A673 (cell line): ENCODE measurements at regions of chr22 and their contacts with region 1.

Region 1: DNA sequence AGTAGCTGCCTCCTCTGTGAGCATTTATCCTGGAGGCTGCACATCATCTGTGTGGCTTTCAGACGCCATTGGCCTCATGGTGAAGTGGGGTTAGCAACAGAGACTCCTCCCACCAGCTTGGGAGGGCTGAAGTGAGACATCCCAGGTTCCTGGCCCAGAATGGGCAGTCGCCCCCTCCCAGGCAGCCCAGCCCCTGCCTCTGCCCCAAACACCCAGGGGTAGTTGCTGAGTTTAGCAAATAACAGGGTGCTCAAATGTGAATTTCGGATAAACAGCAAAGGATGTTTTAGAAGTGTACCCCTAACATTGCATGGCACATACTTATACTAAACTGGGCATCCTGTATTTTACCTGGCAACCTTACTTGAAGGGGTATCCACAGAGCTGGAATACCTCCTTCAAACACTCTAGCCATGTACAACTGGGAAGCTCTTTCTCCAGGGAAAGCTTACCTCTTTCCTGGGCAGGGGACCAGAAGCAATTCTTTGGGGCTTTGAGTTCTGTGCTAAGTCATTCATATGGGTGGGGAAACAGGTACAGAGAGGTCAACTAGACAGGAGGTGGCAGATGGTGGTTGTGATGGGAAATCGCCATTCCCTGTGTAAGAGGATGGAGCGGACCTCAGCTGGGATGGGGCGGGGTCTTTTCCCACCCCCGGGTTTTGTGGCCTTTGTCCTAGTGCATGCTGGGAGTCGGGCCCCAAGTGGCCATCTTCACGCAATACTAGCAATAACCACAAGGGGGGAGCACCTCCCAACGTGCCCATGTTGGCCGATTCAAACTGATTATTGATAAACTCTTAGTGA is 19.3 kb downstream of the MTFP1 start:
- DNase-seq: peak; percentile 80
- H3K4me3 ChIP-seq: no peak overlapping the region
- H3K27ac ChIP-seq: peak overlapping the region; percentile 26
- H3K4me1 ChIP-seq: peaks cover 20% of the 10 kb centered on the region
- H3K27me3 ChIP-seq: no peaks in the 10 kb centered on the region
- CTCF ChIP-seq: peak; percentile 84

Region 2: GRCh38 chr22:30485362-30485988 is 40.6 kb after region 1 on chr22:
- CTCF ChIA-PET with region 1: no interaction called
- POLR2A ChIA-PET with region 1: no interaction called
- intact Hi-C with region 1: loop called (anchors 2 kb)
- DNase-seq: peak; percentile 61
- H3K4me3 ChIP-seq: no peak overlapping the region
- H3K27ac ChIP-seq: no peak overlapping the region
- H3K4me1 ChIP-seq: no peaks in the 10 kb centered on the region
- H3K27me3 ChIP-seq: no peaks in the 10 kb centered on the region
- CTCF ChIP-seq: peak; percentile 97

Region 3: GRCh38 chr22:30606455-30607299 is 161.8 kb after region 1 on chr22 and contains the start of gene TCN2:
- CTCF ChIA-PET with region 1: interaction called, 4 read pairs
- POLR2A ChIA-PET with region 1: no interaction called
- intact Hi-C with region 1: loop called (anchors 10 kb)
- DNase-seq: peak; percentile 67
- H3K4me3 ChIP-seq: peak within 1 kb of the TSS; percentile 57
- H3K27ac ChIP-seq: peak within 1 kb of the TSS; percentile 56
- H3K4me1 ChIP-seq: peaks cover 18% of the 10 kb centered on the region
- H3K27me3 ChIP-seq: no peaks in the 10 kb centered on the region
- CTCF ChIP-seq: no peak
- total RNA-seq, gene TCN2: 7.3 and 9.8 TPM in 2 replicates

Region 4: DNA sequence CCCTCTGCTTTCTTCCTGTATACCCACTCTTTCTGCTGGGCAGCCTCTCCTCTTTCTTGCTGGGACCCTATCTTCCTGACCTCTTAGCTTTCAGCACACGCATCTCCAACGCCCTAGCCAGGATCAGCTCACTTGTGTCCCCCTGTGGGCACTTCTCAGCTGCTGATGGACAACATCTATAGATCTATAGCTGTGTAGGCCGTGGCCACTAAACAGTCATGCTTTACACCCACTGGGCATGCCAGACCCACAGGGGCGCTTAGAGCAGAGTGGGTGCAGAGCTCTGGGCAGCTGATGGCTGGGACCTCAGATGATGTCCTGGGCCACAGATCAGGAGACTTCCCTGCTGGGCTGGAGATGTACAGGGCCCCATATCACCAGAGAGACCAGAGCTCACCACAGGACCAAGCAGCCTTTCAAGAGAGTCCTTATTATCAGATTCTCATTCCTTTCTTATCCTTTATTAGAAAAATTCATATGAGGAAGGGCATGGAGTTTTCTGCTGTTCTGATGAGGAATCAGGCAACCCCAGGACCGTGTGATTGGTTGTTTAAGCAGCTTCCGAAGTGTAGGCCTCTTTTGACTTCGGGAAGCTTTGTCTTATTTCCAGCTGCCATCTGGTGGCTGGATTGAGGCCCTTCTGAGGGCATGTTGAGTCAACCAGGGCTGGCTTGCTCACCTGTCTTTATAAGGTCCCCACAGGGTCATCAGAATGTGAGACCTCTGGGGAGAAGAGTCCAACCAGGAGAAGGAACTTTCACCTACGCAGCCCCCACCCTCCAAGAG is 310.3 kb after region 1 on chr22:
- CTCF ChIA-PET with region 1: interaction called, 4 read pairs
- POLR2A ChIA-PET with region 1: no interaction called
- intact Hi-C with region 1: loop called (anchors 1 kb)
- DNase-seq: peak; percentile 58
- H3K4me3 ChIP-seq: no peak overlapping the region
- H3K27ac ChIP-seq: no peak overlapping the region
- H3K4me1 ChIP-seq: no peaks in the 10 kb centered on the region
- H3K27me3 ChIP-seq: no peaks in the 10 kb centered on the region
- CTCF ChIP-seq: peak; percentile 63